CD4-positive, alpha-beta memory T cell (primary cell): ENCODE measurements at regions of chr11 and their contacts with region 1.

Region 1: DNA sequence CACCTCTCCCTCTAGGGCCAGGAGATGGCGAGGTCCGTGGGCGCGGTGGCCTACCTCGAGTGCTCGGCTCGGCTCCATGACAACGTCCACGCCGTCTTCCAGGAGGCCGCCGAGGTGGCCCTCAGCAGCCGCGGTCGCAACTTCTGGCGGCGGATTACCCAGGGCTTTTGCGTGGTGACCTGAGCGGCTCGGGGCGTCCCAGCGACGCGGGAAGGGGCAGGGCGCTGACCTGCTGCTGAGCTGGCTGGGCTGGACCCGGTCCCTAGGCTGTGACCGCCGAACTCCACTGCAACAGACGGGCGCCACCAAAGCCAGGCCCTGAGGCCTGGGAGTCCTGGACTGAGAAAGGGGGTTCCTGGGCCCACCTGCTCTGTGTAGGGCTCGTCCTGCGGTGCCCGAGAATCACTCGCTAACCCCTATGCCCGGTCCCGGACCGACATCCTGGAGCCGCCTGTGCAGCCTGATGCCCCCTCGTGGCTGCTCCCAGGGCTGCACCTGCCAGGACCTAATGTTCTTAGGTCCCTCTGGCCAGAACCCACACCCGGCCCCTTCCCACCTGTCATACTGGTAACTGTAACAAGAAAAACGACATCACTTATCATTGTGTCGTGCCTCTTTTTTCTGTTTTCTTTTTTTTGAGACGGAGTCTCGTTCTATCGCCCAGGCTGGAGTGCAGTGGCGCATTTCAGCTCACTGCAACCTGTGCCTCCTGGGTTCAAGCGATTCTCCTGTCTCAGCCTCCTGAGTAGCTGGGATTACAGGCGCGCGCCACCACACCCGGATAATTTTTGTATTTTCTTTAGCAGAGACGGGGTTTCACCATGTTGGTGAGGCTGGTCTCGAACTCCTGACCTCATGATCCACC is 15.0 kb downstream of the RHOD start:
- DNase-seq: peak; percentile 59 to 67 (median 62)
- H3K4me3 ChIP-seq: no peak overlapping the region
- H3K4me3 Mint-ChIP-seq: peak overlapping the region in 7 of 8 donors; percentile 43 to 75 (median 66)
- H3K27ac ChIP-seq: no peak overlapping the region
- H3K27ac Mint-ChIP-seq: peak overlapping the region in 1 of 7 donors; percentile 13
- H3K4me1 ChIP-seq: peaks cover 5% of the 10 kb centered on the region
- H3K4me1 Mint-ChIP-seq: peaks cover 0 to 6% (median 3%) of the 10 kb centered on the region in 4 donors
- H3K27me3 ChIP-seq: no peaks in the 10 kb centered on the region
- H3K27me3 Mint-ChIP-seq: peaks cover 0 to 6% of the 10 kb centered on the region in 2 donors

Region 2: GRCh38 chr11:67053896-67054842 is 17.5 kb before region 1 on chr11:
- CTCF ChIA-PET with region 1: interaction called, 12 read pairs
- POLR2A ChIA-PET with region 1: no interaction called
- intact Hi-C with region 1: no loop called
- DNase-seq: peak in 3 of 5 donors; percentile 18 to 24 (median 21)
- H3K4me3 ChIP-seq: no peak overlapping the region
- H3K4me3 Mint-ChIP-seq: no peak overlapping the region
- H3K27ac ChIP-seq: no peak overlapping the region
- H3K27ac Mint-ChIP-seq: peak overlapping the region in 1 of 7 donors; percentile 19
- H3K4me1 ChIP-seq: peaks cover 7% of the 10 kb centered on the region
- H3K4me1 Mint-ChIP-seq: peaks cover 4 to 13% (median 10%) of the 10 kb centered on the region in 4 donors
- H3K27me3 ChIP-seq: no peaks in the 10 kb centered on the region
- H3K27me3 Mint-ChIP-seq: peaks cover 0 to 4% of the 10 kb centered on the region in 2 donors

Region 3: GRCh38 chr11:67153971-67154370 is 82.3 kb after region 1 on chr11:
- CTCF ChIA-PET with region 1: no interaction called
- POLR2A ChIA-PET with region 1: no interaction called
- intact Hi-C with region 1: no loop called
- DNase-seq: no peak
- H3K4me3 ChIP-seq: no peak overlapping the region
- H3K4me3 Mint-ChIP-seq: no peak overlapping the region
- H3K27ac ChIP-seq: no peak overlapping the region
- H3K27ac Mint-ChIP-seq: peak overlapping the region in 1 of 7 donors; percentile 42
- H3K4me1 ChIP-seq: no peaks in the 10 kb centered on the region
- H3K4me1 Mint-ChIP-seq: peaks cover 8 to 22% (median 15%) of the 10 kb centered on the region in 4 donors
- H3K27me3 ChIP-seq: no peaks in the 10 kb centered on the region
- H3K27me3 Mint-ChIP-seq: no peaks in the 10 kb centered on the region